Activated B cell treated with CpG ODN at 0.5 μM for 24 hours (primary cell): ENCODE measurements at regions of chr18 and their contacts with region 1.

Region 1: GRCh38 chr18:75562216-75562615 is 134.7 kb upstream of the SMIM21 start:
- DNase-seq: no peak
- ATAC-seq: no peak
- H3K4me3 Mint-ChIP-seq: no peak overlapping the region
- H3K27ac Mint-ChIP-seq: no peak overlapping the region
- H3K4me1 Mint-ChIP-seq: no peaks in the 10 kb centered on the region
- H3K27me3 Mint-ChIP-seq: no peaks in the 10 kb centered on the region
- CTCF ChIP-seq: no peak

Region 2: DNA sequence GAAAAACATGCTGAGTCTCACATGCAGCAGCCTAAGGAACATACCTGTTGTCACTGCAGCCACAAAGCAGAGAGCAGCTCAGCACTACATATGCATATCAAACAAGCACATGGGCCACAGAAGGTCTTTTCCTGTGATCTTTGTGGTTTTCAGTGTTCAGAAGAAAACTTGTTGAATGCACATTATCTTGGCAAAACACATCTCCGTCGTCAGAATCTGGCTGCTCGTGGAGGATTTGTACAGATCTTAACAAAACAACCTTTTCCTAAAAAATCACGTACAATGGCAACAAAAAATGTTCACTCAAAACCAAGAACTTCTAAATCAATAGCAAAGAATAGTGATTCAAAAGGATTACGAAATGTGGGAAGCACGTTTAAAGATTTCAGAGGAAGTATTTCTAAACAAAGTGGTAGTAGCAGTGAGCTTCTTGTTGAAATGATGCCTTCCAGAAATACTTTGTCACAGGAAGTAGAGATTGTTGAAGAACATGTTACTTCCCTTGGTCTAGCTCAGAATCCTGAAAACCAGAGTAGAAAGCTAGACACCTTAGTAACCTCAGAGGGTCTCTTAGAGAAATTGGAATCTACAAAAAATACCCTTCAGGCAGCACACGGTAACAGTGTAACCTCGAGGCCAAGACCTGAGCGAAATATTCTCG is 930.5 kb before region 1 on chr18:
- CTCF ChIA-PET with region 1: no interaction called
- POLR2A ChIA-PET with region 1: no interaction called
- intact Hi-C with region 1: no loop called
- DNase-seq: no peak
- ATAC-seq: no peak
- H3K4me3 Mint-ChIP-seq: no peak overlapping the region
- H3K27ac Mint-ChIP-seq: no peak overlapping the region
- H3K4me1 Mint-ChIP-seq: peaks cover 5% of the 10 kb centered on the region
- H3K27me3 Mint-ChIP-seq: no peaks in the 10 kb centered on the region
- CTCF ChIP-seq: no peak

Region 3: DNA sequence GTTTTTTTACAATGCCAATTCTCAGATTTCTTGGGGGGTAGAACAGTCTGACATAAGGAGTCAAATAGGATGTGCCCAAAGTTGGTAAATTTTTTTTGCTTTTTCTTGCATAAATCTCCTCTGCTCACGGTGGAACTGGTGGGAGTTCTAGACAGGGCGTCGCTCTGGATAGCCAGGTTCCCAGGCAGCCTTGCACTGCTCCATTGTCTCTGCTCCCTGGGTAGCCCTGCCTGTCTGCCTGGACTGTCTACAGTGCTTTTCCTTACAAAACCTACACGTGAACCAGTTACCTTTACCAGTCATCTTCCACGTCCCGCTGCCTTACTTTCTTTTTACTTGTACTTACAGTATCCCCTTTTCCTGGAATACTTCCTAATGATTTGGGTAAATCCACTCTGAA is 847.4 kb before region 1 on chr18:
- CTCF ChIA-PET with region 1: no interaction called
- POLR2A ChIA-PET with region 1: no interaction called
- intact Hi-C with region 1: no loop called
- DNase-seq: no peak
- ATAC-seq: no peak
- H3K4me3 Mint-ChIP-seq: no peak overlapping the region
- H3K27ac Mint-ChIP-seq: no peak overlapping the region
- H3K4me1 Mint-ChIP-seq: peaks cover 4% of the 10 kb centered on the region
- H3K27me3 Mint-ChIP-seq: no peaks in the 10 kb centered on the region
- CTCF ChIP-seq: no peak

Region 4: GRCh38 chr18:74914052-74914591 is 648.1 kb before region 1 on chr18:
- CTCF ChIA-PET with region 1: no interaction called
- POLR2A ChIA-PET with region 1: no interaction called
- intact Hi-C with region 1: loop called (anchors 5 kb)
- DNase-seq: no peak
- ATAC-seq: no peak
- H3K4me3 Mint-ChIP-seq: no peak overlapping the region
- H3K27ac Mint-ChIP-seq: no peak overlapping the region
- H3K4me1 Mint-ChIP-seq: no peaks in the 10 kb centered on the region
- H3K27me3 Mint-ChIP-seq: no peaks in the 10 kb centered on the region
- CTCF ChIP-seq: no peak